ENCODE measurements at regions of chr14 and their contacts with region 1.

Region 1: GRCh38 chr14:64294672-64295413 is 672 bp upstream of the ESR2 start:
- DNase-seq: peak; percentile 95
- H3K4me3 Mint-ChIP-seq: peak overlapping the region; percentile 79
- H3K27ac Mint-ChIP-seq: no peak overlapping the region
- H3K4me1 Mint-ChIP-seq: peaks cover 29% of the 10 kb centered on the region
- H3K27me3 Mint-ChIP-seq: peaks cover 39% of the 10 kb centered on the region

Region 2: DNA sequence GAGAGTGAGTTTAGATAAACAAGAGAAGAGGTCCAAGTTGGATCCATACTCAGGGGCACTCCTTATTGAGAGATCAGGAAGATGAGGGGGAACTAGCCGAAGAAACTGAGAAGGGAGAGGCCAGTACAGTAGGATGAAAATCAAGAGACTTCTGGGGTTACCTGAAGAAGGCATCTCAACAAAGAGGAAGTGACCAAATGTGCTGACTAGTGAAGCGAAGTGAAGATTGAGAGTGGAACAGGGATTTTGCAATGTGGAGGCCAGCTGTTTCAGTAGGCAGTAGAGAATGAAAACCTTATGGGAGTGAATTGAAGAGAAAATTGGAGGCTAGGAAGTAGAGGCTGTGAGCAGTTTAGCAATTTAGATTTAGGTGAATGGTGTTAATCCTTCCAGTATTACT is 289.0 kb before region 1 on chr14:
- intact Hi-C with region 1: loop called (anchors 2 kb)
- DNase-seq: no peak
- H3K4me3 Mint-ChIP-seq: no peak overlapping the region
- H3K27ac Mint-ChIP-seq: no peak overlapping the region
- H3K4me1 Mint-ChIP-seq: no peaks in the 10 kb centered on the region
- H3K27me3 Mint-ChIP-seq: no peaks in the 10 kb centered on the region

Region 3: GRCh38 chr14:64137657-64138290 is 157.1 kb before region 1 on chr14:
- intact Hi-C with region 1: loop called (anchors 10 kb)
- DNase-seq: no peak
- H3K4me3 Mint-ChIP-seq: no peak overlapping the region
- H3K27ac Mint-ChIP-seq: no peak overlapping the region
- H3K4me1 Mint-ChIP-seq: no peaks in the 10 kb centered on the region
- H3K27me3 Mint-ChIP-seq: no peaks in the 10 kb centered on the region

Region 4: DNA sequence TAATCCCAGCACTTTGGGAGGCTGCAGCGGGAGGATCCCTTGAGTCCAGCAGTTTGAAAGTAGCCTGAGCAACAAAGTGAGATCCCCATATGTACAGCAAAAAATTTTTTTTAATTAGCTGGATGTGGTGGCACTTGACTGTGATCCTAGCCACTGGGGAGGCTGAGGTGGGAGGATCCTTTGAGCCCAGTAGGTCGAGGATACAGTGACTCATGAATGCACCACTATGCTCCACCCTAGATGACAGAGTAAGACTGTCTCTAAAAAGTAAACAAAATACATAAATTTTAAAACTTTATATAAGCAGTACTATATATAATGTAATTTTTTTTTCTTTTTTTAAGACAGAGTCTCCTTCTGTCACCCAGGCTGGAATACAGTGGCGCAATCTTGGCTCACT is 116.0 kb before region 1 on chr14:
- intact Hi-C with region 1: loop called (anchors 5 kb)
- DNase-seq: no peak
- H3K4me3 Mint-ChIP-seq: no peak overlapping the region
- H3K27ac Mint-ChIP-seq: no peak overlapping the region
- H3K4me1 Mint-ChIP-seq: peaks cover 13% of the 10 kb centered on the region
- H3K27me3 Mint-ChIP-seq: no peaks in the 10 kb centered on the region

Region 5: DNA sequence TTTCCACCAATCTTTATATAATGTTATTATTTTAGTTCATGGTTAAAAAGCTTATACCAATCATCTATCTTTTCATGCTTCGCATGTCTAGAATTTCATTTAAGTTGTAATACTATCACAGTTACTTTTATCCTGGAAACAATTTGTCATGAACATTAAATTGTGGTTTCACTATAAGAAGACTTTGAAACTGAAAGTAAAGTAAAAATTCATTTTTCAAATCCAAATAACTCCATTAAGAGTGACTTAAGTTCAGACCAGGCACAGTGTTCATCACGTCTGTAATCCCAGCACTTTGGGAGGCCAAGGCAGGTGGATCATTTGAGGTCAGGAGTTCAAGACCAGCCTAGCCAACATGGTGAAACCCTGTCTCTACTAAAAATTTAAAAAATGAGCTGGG is 13.0 kb before region 1 on chr14:
- intact Hi-C with region 1: loop called (anchors 1 kb)
- DNase-seq: no peak
- H3K4me3 Mint-ChIP-seq: peak overlapping the region; percentile 12
- H3K27ac Mint-ChIP-seq: peak overlapping the region; percentile 30
- H3K4me1 Mint-ChIP-seq: peaks cover 14% of the 10 kb centered on the region
- H3K27me3 Mint-ChIP-seq: no peaks in the 10 kb centered on the region

Region 6: DNA sequence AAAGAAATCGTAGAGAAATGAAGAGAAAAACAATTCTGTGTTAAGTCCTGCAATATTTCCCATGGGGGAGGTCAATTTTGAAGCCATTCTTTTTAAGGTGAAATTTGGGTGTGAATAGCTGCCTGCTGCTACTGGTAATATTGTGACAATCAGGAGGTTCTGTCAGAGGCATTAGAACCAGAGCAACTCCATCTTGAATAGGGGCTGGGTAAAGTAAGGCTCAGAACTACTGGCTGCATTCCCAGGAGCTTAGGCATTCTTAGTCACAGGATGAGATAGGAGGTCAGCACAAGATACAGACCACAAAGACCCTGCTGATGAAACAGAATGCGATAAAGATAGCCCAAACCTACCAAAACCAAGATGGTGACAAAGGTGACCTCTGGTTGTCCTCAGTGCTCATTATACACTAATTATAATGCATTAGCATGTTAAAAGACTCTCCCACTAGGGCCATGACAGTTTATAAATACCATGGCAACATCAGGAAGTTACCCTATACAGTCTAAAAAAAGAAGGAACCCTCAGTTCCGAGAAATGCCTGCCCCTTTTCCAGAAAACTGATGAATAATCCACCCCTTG is 68.5 kb after region 1 on chr14:
- intact Hi-C with region 1: no loop called
- DNase-seq: no peak
- H3K4me3 Mint-ChIP-seq: no peak overlapping the region
- H3K27ac Mint-ChIP-seq: no peak overlapping the region
- H3K4me1 Mint-ChIP-seq: no peaks in the 10 kb centered on the region
- H3K27me3 Mint-ChIP-seq: peaks cover 2% of the 10 kb centered on the region

Measured in activated CD4-positive, alpha-beta T cell treated with anti-CD3 and anti-CD28 coated beads, Interleukin-2, amount 10 ng/mL, durations not matched to agents 24 days and 14 days (primary cell).